Activated CD4-positive, alpha-beta T cell treated with anti-CD3 and anti-CD28 coated beads for 36 hours (primary cell): ENCODE measurements at regions of chr6 and their contacts with region 1.

Region 1: DNA sequence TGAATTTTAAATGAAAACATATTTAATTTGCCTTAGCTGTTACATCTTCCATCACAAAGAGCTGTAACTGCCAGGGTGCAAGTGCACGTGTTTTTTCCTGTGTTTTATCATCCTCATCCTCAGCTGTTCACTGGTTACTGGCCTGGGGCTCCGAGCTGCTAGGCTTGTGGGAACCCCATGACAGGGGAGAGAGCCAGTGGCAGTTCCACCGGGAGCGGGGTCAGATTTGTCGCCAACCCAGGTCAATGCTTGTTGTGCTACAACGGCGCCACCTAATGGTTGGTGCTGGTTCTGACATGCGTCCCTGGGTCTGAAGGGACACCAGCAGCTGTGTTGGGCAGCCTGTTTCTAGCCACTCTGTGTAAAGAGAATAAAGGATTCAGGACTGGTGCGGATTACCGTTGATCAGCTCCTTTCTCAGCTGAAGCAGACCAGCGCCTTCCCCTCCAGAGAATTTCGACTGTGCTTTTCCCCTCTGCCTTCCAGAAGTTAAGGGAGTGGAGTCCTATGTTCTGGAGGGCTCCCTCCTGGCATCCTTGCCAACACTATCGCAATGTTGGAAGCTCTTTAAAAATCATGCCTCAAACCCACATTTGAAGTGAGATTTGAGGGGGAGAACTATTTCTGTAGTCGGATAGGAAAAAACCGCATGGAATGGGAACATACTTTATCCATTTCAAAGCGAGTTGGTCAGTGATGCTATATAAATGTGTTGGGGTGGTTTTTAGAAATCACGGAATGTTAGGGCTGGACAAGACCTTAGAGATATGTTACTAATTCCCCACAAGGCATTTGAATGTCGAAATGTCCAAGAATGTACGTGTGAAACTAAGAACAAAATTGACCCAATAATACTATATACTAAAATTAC is 32.1 kb downstream of the SUMO4 start:
- DNase-seq: peak; percentile 95
- ATAC-seq: peak; percentile 98
- H3K4me3 Mint-ChIP-seq: no peak overlapping the region
- H3K27ac Mint-ChIP-seq: peak overlapping the region; percentile 59
- H3K4me1 Mint-ChIP-seq: peaks cover 4% of the 10 kb centered on the region
- H3K27me3 Mint-ChIP-seq: no peaks in the 10 kb centered on the region

Region 2: DNA sequence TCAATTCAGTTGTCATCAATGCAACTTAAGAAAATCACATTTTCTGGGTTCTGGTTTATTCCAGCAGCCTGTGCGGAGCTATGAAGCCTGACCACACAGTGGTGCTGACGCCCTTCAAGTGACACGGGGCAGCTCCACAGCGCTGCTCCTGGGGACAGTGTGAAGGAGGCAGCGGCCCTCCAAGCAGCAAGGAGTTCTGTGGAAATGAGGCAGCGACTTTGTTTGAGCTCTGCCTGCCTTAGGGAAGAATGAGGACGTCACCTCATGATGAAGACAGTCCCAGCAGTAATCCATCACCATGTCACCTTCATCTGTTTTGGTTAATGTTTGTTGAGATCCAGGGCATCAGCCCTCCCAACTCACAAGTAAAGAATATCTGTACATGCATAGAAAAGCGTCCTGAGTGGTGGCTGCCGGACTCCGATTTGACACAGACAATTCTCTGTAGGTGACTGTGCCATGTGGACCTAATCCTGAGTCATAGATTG is 853.9 kb before region 1 on chr6:
- CTCF ChIA-PET with region 1: interaction called, 6 read pairs
- POLR2A ChIA-PET with region 1: no interaction called
- intact Hi-C with region 1: loop called in 1 of 2 experiments (anchors 5 kb)
- DNase-seq: peak; percentile 74
- ATAC-seq: peak; percentile 99
- H3K4me3 Mint-ChIP-seq: no peak overlapping the region
- H3K27ac Mint-ChIP-seq: no peak overlapping the region
- H3K4me1 Mint-ChIP-seq: peaks cover 5% of the 10 kb centered on the region
- H3K27me3 Mint-ChIP-seq: peaks cover 36% of the 10 kb centered on the region

Region 3: GRCh38 chr6:149075616-149076364 is 356.4 kb before region 1 on chr6:
- CTCF ChIA-PET with region 1: interaction called, 30 read pairs
- POLR2A ChIA-PET with region 1: no interaction called
- intact Hi-C with region 1: no loop called
- DNase-seq: peak; percentile 41
- ATAC-seq: peak; percentile 77
- H3K4me3 Mint-ChIP-seq: peak overlapping the region; percentile 21
- H3K27ac Mint-ChIP-seq: peak overlapping the region; percentile 52
- H3K4me1 Mint-ChIP-seq: peaks cover 36% of the 10 kb centered on the region
- H3K27me3 Mint-ChIP-seq: no peaks in the 10 kb centered on the region

Region 4: DNA sequence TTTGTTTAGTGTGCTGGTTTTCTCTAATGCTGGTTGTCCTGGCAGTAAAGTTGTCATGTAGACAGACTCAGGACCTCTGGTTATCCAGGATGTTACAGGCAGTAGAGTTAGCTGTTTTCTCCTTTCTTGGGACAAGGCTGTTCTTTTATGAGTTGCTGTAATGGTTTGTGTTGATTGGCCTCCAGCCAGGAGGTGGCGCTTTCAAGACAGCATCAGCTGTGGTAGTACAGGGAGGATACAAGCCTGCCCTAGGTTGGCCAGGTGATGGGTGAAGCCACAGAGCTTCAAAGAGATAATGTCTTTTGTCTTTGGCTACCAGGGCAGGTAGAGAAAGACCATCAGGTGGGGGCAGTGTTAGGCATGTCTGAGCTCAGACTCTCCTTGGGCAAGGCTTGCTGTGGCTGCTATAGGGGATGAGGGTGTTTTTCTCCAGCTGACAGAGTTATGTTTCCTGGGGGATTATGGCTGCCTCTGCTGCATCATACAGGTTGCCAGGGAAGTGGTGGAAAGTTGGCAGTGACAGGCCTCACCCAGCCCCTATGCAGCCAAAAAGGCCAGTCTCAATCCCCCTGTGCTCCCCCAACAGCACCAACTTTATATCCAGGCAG is 241.8 kb before region 1 on chr6:
- CTCF ChIA-PET with region 1: interaction called, 6 read pairs
- POLR2A ChIA-PET with region 1: no interaction called
- intact Hi-C with region 1: loop called (anchors 1 to 2 kb)
- DNase-seq: peak; percentile 84
- ATAC-seq: peak; percentile 94
- H3K4me3 Mint-ChIP-seq: no peak overlapping the region
- H3K27ac Mint-ChIP-seq: peak overlapping the region; percentile 1
- H3K4me1 Mint-ChIP-seq: peaks cover 18% of the 10 kb centered on the region
- H3K27me3 Mint-ChIP-seq: no peaks in the 10 kb centered on the region

Region 5: GRCh38 chr6:149419696-149420404 is 12.3 kb before region 1 on chr6:
- CTCF ChIA-PET with region 1: interaction called, 31 read pairs
- POLR2A ChIA-PET with region 1: interaction called, 3 read pairs
- intact Hi-C with region 1: no loop called
- DNase-seq: no peak
- ATAC-seq: peak; percentile 19
- H3K4me3 Mint-ChIP-seq: no peak overlapping the region
- H3K27ac Mint-ChIP-seq: peak overlapping the region; percentile 51
- H3K4me1 Mint-ChIP-seq: peaks cover 25% of the 10 kb centered on the region
- H3K27me3 Mint-ChIP-seq: no peaks in the 10 kb centered on the region

Region 6: DNA sequence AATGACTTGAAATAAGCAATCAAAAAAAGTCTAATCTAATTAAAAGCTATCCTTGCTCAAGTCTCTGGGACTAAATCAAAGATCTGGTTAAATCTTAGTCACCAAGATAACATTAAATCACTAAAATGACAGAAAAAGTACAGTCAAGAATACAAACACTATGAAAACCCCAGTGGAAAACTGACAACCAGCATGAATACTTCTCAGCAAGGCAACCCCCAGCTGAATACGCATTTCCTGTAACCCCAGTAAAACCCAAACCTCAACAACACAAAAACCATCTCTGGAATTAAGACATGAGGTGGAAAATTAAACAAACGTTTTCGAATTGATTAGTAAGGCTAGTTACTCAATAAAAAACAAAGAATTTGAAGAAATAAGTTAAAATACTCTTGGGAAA is 76.3 kb after region 1 on chr6:
- CTCF ChIA-PET with region 1: interaction called, 10 read pairs
- POLR2A ChIA-PET with region 1: no interaction called
- intact Hi-C with region 1: no loop called
- DNase-seq: peak; percentile 60
- ATAC-seq: peak; percentile 90
- H3K4me3 Mint-ChIP-seq: peak overlapping the region; percentile 48
- H3K27ac Mint-ChIP-seq: peak overlapping the region; percentile 99
- H3K4me1 Mint-ChIP-seq: peaks cover 62% of the 10 kb centered on the region
- H3K27me3 Mint-ChIP-seq: no peaks in the 10 kb centered on the region